Activated CD4-positive, alpha-beta memory T cell treated with anti-CD3 and anti-CD28 coated beads for 36 hours (primary cell): ENCODE measurements at regions of chr10 and their contacts with region 1.

Region 1: GRCh38 chr10:79068562-79069324 is at the start of gene ZMIZ1:
- DNase-seq: peak; percentile 88
- H3K4me3 Mint-ChIP-seq: peak within 1 kb of the TSS; percentile 89
- H3K27ac Mint-ChIP-seq: peak within 1 kb of the TSS; percentile 66
- H3K4me1 Mint-ChIP-seq: peaks cover 36% of the 10 kb centered on the region
- H3K27me3 Mint-ChIP-seq: no peaks in the 10 kb centered on the region
- total RNA-seq, gene ZMIZ1: 28.5 to 29.2 TPM

Region 2: GRCh38 chr10:78047314-78047891 is 1021.3 kb before region 1 on chr10:
- CTCF ChIA-PET with region 1: no interaction called
- POLR2A ChIA-PET with region 1: no interaction called
- intact Hi-C with region 1: loop called (anchors 5 kb)
- DNase-seq: peak; percentile 86
- H3K4me3 Mint-ChIP-seq: no peak overlapping the region
- H3K27ac Mint-ChIP-seq: no peak overlapping the region
- H3K4me1 Mint-ChIP-seq: peaks cover 28% of the 10 kb centered on the region
- H3K27me3 Mint-ChIP-seq: no peaks in the 10 kb centered on the region

Region 3: DNA sequence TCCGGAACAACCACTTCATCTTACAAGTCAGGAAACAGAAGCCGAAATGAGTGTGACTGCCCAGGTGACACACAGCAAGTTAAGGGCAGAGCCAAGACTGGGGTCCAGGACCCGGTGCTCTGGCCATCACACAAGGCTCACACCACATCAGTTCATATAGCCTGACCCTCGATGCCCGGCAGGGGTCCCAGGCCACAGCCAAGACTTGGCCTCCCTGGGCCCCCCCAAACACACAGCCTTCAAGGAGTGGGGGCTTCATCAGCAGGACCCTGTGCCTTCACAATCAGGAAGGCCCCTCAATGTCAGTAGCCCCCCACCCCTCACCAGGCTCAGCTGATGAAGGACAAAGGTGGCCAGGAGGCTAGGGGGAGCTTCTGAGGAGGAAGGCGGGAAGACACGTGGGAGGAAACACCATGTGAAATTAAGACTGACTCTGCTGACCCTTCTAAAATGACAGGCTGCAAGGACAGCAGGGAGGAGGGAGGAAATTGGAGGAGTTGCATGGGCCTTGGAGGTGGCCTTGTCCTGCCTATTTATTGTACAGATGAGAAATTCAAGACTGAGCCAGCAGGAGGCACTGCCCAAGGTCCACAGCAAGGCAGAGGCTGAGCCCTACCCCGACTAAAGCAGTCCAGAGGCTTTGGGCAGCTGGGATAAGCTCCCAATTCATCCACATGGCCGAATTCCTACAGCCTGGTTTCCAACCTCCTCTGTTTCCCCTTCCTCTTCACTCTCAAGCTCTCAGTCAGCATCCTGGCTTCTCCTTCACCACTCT is 216.1 kb before region 1 on chr10:
- CTCF ChIA-PET with region 1: no interaction called
- POLR2A ChIA-PET with region 1: no interaction called
- intact Hi-C with region 1: loop called (anchors 10 kb)
- DNase-seq: peak; percentile 32
- H3K4me3 Mint-ChIP-seq: no peak overlapping the region
- H3K27ac Mint-ChIP-seq: no peak overlapping the region
- H3K4me1 Mint-ChIP-seq: no peaks in the 10 kb centered on the region
- H3K27me3 Mint-ChIP-seq: no peaks in the 10 kb centered on the region

Region 4: GRCh38 chr10:79013406-79013987 is 55.2 kb before region 1 on chr10:
- CTCF ChIA-PET with region 1: no interaction called
- POLR2A ChIA-PET with region 1: no interaction called
- intact Hi-C with region 1: no loop called
- DNase-seq: no peak
- H3K4me3 Mint-ChIP-seq: no peak overlapping the region
- H3K27ac Mint-ChIP-seq: no peak overlapping the region
- H3K4me1 Mint-ChIP-seq: no peaks in the 10 kb centered on the region
- H3K27me3 Mint-ChIP-seq: peaks cover 1% of the 10 kb centered on the region

Region 5: DNA sequence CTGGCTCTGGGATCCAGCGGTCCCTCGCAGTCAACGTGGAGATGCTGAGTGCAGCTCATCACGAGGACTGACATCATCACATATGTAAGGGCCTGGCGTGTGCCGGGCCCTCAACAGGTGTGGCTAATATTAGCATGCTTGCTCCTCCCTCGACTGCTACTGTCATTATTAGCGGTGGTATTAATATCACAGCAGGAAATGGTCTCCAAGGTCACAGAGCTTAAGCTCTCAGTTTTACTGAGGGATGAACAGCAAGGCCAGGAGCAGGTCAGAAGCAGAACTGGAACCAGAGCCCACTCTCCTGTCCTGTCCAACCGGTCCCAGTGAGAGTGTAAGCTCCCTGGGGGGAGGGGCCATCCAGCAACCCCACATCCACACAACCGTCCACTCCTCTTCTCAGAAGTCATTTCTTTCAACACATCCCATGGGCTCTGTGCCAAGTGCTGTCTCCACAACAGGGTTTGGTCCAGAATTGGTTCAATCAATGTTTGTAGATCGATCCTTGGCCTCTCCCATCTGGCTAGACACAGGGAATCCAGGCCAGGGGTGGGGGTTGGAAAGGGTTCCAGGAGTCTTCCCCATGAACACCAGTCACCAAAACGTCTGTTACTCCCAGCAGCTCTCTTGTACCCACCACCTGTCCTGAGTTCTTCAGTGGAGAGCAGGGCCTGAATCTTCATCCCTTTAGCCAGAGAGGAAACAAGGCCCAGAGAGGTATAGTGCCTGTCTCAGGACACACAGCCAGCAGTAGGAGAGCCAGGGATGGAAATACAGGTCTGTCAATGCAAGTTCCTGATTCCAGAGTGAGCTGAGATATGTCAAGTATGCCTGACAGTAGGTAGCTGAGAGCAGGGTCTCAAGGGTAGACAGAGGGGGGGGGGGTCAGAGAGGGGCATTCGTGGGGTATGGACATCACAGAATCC is 45.2 kb before region 1 on chr10:
- CTCF ChIA-PET with region 1: no interaction called
- POLR2A ChIA-PET with region 1: no interaction called
- intact Hi-C with region 1: loop called (anchors 2 kb)
- DNase-seq: no peak
- H3K4me3 Mint-ChIP-seq: no peak overlapping the region
- H3K27ac Mint-ChIP-seq: no peak overlapping the region
- H3K4me1 Mint-ChIP-seq: peaks cover 28% of the 10 kb centered on the region
- H3K27me3 Mint-ChIP-seq: no peaks in the 10 kb centered on the region

Region 6: GRCh38 chr10:79242620-79243152 is 173.9 kb after region 1 on chr10:
- CTCF ChIA-PET with region 1: no interaction called
- POLR2A ChIA-PET with region 1: no interaction called
- intact Hi-C with region 1: loop called (anchors 5 kb)
- DNase-seq: peak; percentile 79
- H3K4me3 Mint-ChIP-seq: peak overlapping the region; percentile 76
- H3K27ac Mint-ChIP-seq: peak overlapping the region; percentile 91
- H3K4me1 Mint-ChIP-seq: peaks cover 55% of the 10 kb centered on the region
- H3K27me3 Mint-ChIP-seq: no peaks in the 10 kb centered on the region